Activated CD8-positive, alpha-beta T cell treated with anti-CD3 and anti-CD28 coated beads for 36 hours (primary cell): ENCODE measurements at regions of chr1 and their contacts with region 1.

Region 1: DNA sequence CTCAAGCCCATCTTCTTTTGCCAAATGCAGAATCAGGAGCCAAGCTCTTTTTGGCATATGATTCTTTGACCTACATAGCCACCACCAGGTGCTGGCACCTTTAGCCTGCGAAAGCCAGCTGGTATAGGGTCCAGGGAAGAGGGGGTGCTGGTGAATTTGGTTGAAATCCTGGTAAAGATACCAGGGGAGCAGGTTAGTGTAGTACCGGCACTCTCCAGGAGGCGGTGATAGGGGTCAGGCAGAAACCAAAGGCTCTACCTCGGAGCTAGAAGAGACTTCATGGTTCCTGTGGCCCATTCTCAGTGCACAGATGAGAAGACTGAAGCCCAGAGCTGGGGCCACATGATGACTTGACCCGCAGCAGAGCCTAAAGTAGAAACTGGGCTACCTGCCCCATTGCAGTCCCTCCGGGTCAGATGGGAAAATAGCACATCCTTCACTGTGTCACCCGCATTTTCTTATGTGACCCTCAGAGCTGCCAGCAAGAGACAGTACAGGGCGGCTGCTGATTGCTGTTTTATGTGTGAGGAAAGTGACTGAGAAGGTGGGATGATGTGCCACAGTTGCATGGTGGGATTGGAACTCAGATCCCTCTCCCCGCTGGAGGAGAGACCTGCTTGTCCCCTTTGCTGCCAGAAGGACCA is 36.0 kb upstream of the IL19 start:
- DNase-seq: peak; percentile 80
- ATAC-seq: peak; percentile 48
- H3K4me3 Mint-ChIP-seq: no peak overlapping the region
- H3K27ac Mint-ChIP-seq: peak overlapping the region; percentile 22
- H3K4me1 Mint-ChIP-seq: peaks cover 64% of the 10 kb centered on the region
- H3K27me3 Mint-ChIP-seq: no peaks in the 10 kb centered on the region
- CTCF ChIP-seq: peak; percentile 93

Region 2: GRCh38 chr1:206643118-206643698 is 91.4 kb before region 1 on chr1:
- CTCF ChIA-PET with region 1: no interaction called
- POLR2A ChIA-PET with region 1: no interaction called
- intact Hi-C with region 1: no loop called
- DNase-seq: no peak
- ATAC-seq: no peak
- H3K4me3 Mint-ChIP-seq: no peak overlapping the region
- H3K27ac Mint-ChIP-seq: no peak overlapping the region
- H3K4me1 Mint-ChIP-seq: peaks cover 2% of the 10 kb centered on the region
- H3K27me3 Mint-ChIP-seq: peaks cover 2% of the 10 kb centered on the region
- CTCF ChIP-seq: no peak

Region 3: DNA sequence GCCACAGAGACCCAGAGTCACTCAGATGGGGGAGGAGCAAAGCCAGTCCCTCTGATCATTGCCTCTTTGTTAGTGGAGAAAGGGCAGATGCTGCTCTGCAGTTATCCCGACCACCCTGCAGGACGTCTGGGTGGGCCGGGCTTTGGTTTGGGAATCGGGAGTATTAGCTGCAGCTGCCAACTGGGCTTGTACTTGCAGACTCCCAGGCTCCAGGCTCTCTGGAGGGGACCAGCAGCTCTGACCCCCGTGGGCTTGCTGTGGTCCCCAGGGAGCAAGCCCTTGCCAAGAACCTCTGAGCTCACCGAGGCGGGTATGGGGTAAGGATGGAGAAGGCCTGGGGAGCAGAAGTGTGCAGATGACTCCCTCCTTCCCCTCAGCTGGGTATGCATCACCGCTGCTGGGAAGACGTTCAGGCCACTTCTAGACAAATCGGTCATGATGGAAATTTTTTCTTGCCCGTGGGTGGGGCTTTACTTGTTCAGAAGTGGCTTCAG is 28.3 kb before region 1 on chr1:
- CTCF ChIA-PET with region 1: interaction called, 13 read pairs
- POLR2A ChIA-PET with region 1: no interaction called
- intact Hi-C with region 1: no loop called
- DNase-seq: peak; percentile 84
- ATAC-seq: peak; percentile 49
- H3K4me3 Mint-ChIP-seq: no peak overlapping the region
- H3K27ac Mint-ChIP-seq: peak overlapping the region; percentile 28
- H3K4me1 Mint-ChIP-seq: peaks cover 83% of the 10 kb centered on the region
- H3K27me3 Mint-ChIP-seq: no peaks in the 10 kb centered on the region
- CTCF ChIP-seq: no peak

Region 4: DNA sequence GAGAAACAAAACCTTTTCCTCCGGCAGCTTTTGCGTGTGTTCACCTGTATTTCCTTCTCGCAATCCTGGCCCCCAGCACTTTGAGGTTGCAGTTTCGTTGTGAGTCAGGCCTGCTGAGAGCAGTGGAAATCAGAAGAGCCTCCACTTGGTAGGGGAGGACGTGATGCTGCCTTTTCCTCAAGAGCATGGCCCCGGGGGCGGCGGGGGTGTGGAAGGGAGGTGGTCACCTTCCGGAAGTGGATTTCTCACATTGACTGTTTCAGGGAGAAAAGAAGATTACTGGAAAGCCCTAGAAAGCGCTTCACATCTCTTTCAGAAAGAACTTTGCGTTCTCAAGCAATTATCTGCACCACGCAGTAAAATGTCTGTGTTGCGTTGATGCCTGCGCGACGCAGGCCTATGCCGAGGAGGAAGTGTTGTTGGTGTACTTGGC is 49.9 kb after region 1 on chr1:
- CTCF ChIA-PET with region 1: interaction called, 15 read pairs
- POLR2A ChIA-PET with region 1: interaction called, 4 read pairs
- intact Hi-C with region 1: loop called (anchors 5 kb)
- DNase-seq: peak; percentile 97
- ATAC-seq: peak; percentile 75
- H3K4me3 Mint-ChIP-seq: peak overlapping the region; percentile 11
- H3K27ac Mint-ChIP-seq: peak overlapping the region; percentile 78
- H3K4me1 Mint-ChIP-seq: peaks cover 65% of the 10 kb centered on the region
- H3K27me3 Mint-ChIP-seq: no peaks in the 10 kb centered on the region
- CTCF ChIP-seq: no peak

Region 5: GRCh38 chr1:206808615-206809014 is 74.0 kb after region 1 on chr1:
- CTCF ChIA-PET with region 1: interaction called, 628 read pairs
- POLR2A ChIA-PET with region 1: interaction called, 19 read pairs
- intact Hi-C with region 1: loop called (anchors 1 kb)
- DNase-seq: peak; percentile 69
- ATAC-seq: peak; percentile 89
- H3K4me3 Mint-ChIP-seq: no peak overlapping the region
- H3K27ac Mint-ChIP-seq: no peak overlapping the region
- H3K4me1 Mint-ChIP-seq: peaks cover 49% of the 10 kb centered on the region
- H3K27me3 Mint-ChIP-seq: no peaks in the 10 kb centered on the region
- CTCF ChIP-seq: peak; percentile 69

Region 6: GRCh38 chr1:206856674-206857464 is 122.2 kb after region 1 on chr1:
- CTCF ChIA-PET with region 1: interaction called, 24 read pairs
- POLR2A ChIA-PET with region 1: no interaction called
- intact Hi-C with region 1: no loop called
- DNase-seq: peak; percentile 30
- ATAC-seq: peak; percentile 72
- H3K4me3 Mint-ChIP-seq: no peak overlapping the region
- H3K27ac Mint-ChIP-seq: no peak overlapping the region
- H3K4me1 Mint-ChIP-seq: peaks cover 11% of the 10 kb centered on the region
- H3K27me3 Mint-ChIP-seq: no peaks in the 10 kb centered on the region
- CTCF ChIP-seq: peak; percentile 58

Region 7: DNA sequence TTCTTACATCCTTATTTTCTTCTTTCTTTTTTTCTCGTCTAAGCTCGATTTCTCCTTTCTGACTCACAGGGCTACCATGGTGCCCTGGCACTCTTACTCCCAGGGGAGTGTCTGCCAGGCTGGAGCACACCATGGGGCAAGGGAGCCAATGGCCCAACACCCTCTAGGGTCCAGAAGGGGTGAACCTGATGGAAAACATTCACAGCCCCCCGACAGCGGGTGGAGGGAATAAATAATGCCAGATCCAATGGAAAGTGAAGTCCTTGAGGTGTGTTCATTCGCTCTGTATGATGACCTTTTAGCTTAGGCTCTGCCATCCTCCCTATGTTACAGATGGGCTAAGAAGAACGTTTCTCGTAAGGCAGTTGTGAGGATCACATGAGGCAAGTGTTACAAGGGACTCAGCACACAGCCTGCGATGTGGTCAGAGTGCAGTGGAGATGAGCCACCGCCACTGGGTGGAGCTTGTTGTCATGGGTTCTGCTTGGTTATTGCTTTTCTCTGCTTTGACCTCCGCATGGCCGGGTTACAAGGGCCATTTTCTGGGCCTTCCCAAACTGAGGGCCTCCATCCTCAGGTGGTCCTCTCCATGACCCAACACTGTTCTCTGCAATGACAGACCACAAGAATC is 190.6 kb after region 1 on chr1:
- CTCF ChIA-PET with region 1: interaction called, 23 read pairs
- POLR2A ChIA-PET with region 1: no interaction called
- intact Hi-C with region 1: no loop called
- DNase-seq: peak; percentile 93
- ATAC-seq: peak; percentile 67
- H3K4me3 Mint-ChIP-seq: no peak overlapping the region
- H3K27ac Mint-ChIP-seq: no peak overlapping the region
- H3K4me1 Mint-ChIP-seq: peaks cover 41% of the 10 kb centered on the region
- H3K27me3 Mint-ChIP-seq: no peaks in the 10 kb centered on the region
- CTCF ChIP-seq: no peak